ENCODE measurements at regions of chr17 and their contacts with region 1.

Region 1: DNA sequence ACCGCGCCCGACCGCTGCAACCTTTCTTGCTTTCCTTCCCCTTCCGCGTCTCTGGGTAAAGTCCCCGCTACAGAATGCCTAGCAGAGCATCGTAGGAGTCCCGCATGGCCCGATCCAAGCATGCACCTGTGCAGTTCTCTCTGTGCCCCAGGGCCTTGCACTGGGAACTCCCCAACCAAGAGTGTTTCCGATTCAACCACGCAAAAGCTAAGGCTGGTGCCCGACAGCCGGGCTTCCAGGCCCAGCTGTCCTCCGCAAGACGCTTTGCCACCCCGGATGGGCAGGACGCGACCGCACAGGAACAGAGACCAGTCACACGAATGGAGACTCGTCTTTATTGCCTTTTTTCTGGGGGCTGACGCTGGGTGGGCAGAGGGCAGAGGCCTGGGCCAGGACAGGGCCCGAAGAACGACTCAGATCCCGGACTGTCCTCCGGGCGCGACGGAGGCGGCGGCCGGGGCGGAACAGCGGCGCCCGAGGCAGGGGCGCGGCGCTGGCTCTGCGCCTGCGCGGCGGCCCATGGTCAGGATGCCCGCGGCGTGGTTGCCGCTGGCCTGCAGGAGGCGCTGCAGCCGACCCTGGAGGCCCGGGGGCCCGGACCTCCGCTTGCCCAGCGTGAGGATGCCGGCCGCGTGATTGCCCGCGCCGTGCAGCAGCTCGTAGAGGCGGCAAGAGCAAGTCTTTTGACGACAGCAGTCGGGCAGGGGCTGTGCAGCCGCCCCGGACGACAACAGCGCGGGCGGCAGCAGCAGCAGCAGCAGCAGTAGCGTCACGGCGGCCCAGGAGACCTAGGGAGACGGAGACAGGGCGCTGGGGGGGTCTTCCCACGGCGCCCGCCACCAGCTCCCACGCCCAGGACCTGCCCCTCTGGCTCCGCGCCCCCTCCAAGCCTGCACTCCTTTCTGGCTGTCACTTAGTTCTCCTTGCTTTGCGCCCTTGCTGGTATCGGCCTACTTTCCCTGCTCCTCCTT is 1.2 kb downstream of the HCRT start:
- DNase-seq: peak; percentile 88
- H3K4me3 Mint-ChIP-seq: peak overlapping the region; percentile 80
- H3K27ac Mint-ChIP-seq: peak overlapping the region; percentile 76
- H3K4me1 Mint-ChIP-seq: peaks cover 49% of the 10 kb centered on the region
- H3K27me3 Mint-ChIP-seq: no peaks in the 10 kb centered on the region

Region 2: GRCh38 chr17:42019509-42020404 is 164.3 kb before region 1 on chr17 and contains the start of gene NKIRAS2:
- CTCF ChIA-PET with region 1: interaction called, 9 read pairs
- POLR2A ChIA-PET with region 1: interaction called, 7 read pairs
- intact Hi-C with region 1: loop called (anchors 10 kb)
- DNase-seq: peak; percentile 97
- H3K4me3 Mint-ChIP-seq: peak within 1 kb of the TSS; percentile 96
- H3K27ac Mint-ChIP-seq: peak within 1 kb of the TSS; percentile 38
- H3K4me1 Mint-ChIP-seq: peaks cover 47% of the 10 kb centered on the region
- H3K27me3 Mint-ChIP-seq: no peaks in the 10 kb centered on the region
- total RNA-seq, gene NKIRAS2: 15.6 to 16.1 TPM

Region 3: DNA sequence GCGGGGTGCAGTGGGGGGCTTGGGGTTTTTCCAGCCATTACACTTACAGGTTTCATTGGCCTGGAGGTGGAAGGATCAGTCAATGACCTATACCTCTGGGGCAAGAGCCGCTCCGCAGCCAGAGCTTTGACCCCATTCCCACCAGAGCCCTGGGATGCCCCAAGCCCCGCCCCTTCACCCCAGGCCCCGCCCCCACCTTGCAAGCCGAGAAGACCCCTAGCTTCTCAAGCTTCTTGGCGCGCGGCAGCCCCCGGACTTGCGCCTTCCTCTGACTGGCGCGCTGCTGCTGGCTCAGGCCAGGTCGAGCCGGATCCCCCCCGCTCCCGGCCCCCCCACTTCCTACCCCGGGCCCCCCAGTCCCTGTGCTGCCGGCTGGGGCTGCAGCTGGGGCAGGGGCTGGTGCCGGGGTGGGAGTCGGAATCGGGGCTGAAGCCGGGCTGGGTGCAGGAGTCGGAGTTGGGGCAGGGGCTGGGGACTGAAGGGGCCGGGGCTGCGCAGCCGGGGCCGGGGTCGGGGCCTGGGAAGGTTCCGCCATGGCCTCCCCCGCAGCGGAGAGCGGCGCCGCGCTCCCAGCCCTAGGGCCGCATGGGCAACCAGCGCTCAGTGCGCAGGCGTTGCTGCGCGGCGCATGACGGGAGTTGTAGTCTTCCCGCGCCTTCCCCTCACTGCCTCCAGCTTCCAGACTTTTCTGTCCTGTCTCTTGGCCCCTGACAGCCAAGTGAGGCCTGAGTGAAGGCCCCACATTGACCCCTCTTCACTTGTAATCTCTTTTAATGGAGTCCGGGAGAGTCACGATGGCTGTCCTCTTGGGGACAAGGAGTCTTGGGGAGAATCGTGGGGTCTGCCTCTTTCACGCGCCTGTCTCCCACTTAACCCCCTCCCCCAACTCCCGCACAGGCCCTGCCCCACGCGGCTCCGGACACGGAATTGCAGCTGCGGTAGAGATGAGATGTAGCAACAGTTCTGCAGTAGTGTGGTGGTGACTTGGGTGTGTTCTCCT is 63.0 kb before region 1 on chr17 and contains the start of gene KAT2A:
- CTCF ChIA-PET with region 1: interaction called, 9 read pairs
- POLR2A ChIA-PET with region 1: interaction called, 3 read pairs
- intact Hi-C with region 1: loop called (anchors 1 kb)
- DNase-seq: peak; percentile 85
- H3K4me3 Mint-ChIP-seq: peak within 1 kb of the TSS; percentile 56
- H3K27ac Mint-ChIP-seq: peak within 1 kb of the TSS; percentile 51
- H3K4me1 Mint-ChIP-seq: peaks cover 31% of the 10 kb centered on the region
- H3K27me3 Mint-ChIP-seq: no peaks in the 10 kb centered on the region
- total RNA-seq, gene KAT2A: 38.6 to 41.0 TPM

Region 4: GRCh38 chr17:42153919-42154742 is 29.9 kb before region 1 on chr17:
- CTCF ChIA-PET with region 1: interaction called, 7 read pairs
- POLR2A ChIA-PET with region 1: no interaction called
- intact Hi-C with region 1: loop called (anchors 2 kb)
- DNase-seq: peak; percentile 20
- H3K4me3 Mint-ChIP-seq: peak overlapping the region; percentile 86
- H3K27ac Mint-ChIP-seq: peak overlapping the region; percentile 80
- H3K4me1 Mint-ChIP-seq: peaks cover 34% of the 10 kb centered on the region
- H3K27me3 Mint-ChIP-seq: no peaks in the 10 kb centered on the region

Region 5: DNA sequence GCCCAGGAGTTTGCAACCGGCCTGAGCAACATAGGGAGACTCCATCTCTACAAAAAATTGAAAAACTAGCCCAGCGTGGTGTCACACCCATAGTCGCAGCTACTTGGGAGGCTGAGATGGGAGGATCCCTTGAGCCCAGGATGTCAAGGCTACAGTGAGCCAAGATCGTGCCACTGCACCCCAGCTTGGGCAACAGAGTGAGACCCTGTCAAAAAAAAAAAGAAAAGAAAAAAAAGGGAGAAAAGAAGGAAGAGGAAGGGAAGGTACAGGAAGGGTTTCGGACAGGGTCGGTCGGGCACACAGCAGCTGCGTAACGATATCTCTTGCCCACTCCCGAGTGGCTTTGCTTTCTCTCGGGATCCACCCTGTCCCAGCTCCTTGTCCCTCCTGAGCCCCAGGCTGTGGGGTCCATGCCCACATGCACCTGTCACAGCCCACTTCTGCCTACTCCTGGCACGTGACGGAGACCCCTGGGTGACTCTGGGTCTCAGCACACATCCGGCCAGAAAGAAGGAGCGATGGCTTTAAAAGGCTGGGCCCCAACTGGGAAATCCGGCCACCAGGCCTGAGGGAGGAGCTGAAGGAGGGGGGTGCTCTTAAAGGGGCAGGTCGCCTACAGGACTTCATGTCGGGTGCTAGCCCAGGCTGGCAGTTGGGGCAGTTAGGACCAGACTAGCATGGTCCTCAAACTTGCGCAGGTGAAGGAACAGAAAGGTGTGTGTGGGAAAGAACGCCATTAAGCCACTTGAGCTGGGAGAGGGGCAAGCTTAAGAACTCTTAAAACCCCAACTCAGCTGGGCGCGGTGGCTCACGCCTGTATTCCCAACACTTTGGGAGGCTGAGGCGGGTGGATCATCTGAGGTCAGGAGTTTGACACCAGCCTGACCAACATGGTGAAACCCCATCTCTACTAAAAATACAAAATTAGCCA is 10.2 kb after region 1 on chr17 and contains the start of gene GHDC:
- CTCF ChIA-PET with region 1: interaction called, 26 read pairs
- POLR2A ChIA-PET with region 1: interaction called, 6 read pairs
- intact Hi-C with region 1: loop called (anchors 1 kb)
- DNase-seq: peak; percentile 89
- H3K4me3 Mint-ChIP-seq: peak within 1 kb of the TSS; percentile 81
- H3K27ac Mint-ChIP-seq: peak within 1 kb of the TSS; percentile 68
- H3K4me1 Mint-ChIP-seq: peaks cover 18% of the 10 kb centered on the region
- H3K27me3 Mint-ChIP-seq: no peaks in the 10 kb centered on the region
- total RNA-seq, gene GHDC: 13.1 to 13.5 TPM

Region 6: DNA sequence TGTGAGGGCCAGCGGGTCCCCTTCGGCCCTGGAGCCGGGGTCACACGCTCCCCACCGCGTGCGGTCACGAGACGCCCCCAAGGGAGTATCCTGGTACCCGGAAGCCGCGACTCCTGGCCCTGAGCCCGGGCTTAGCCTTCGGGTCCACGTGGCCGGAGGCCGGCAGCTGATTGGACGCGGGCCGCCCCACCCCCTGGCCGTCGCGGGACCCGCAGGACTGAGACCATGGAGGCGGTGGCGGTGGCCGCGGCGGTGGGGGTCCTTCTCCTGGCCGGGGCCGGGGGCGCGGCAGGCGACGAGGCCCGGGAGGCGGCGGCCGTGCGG is 352.0 kb after region 1 on chr17 and contains the start of gene NAGLU:
- CTCF ChIA-PET with region 1: no interaction called
- POLR2A ChIA-PET with region 1: no interaction called
- intact Hi-C with region 1: loop called (anchors 10 kb)
- DNase-seq: peak; percentile 91
- H3K4me3 Mint-ChIP-seq: peak within 1 kb of the TSS; percentile 87
- H3K27ac Mint-ChIP-seq: peak within 1 kb of the TSS; percentile 74
- H3K4me1 Mint-ChIP-seq: peaks cover 32% of the 10 kb centered on the region
- H3K27me3 Mint-ChIP-seq: peaks cover 4% of the 10 kb centered on the region
- total RNA-seq, gene NAGLU: 12.2 to 13.9 TPM

Measured in activated CD4-positive, alpha-beta memory T cell treated with anti-CD3 and anti-CD28 coated beads for 36 hours (primary cell).